BJ (cell line): ENCODE measurements at regions of chr11 and their contacts with region 1.

Region 1: GRCh38 chr11:17063171-17064002 is 14.1 kb downstream of the RPS13 start:
- DNase-seq: no peak
- H3K4me3 ChIP-seq: no peak overlapping the region
- H3K27me3 ChIP-seq: no peaks in the 10 kb centered on the region
- CTCF ChIP-seq: peak; percentile 87

Region 2: DNA sequence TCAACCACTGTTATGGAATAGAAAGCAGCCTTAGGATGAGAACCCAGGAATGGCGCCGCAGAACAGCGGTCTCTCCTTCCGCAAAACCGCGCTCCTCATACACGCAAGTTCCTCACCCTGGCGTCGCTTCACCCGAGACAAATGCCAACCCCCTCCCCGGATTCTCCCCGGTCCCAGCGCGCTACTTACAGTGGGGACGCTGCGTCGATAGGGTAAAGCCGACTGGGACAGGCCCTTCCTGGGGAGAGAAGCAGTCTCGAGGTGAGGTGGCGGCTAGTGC is 13.8 kb after region 1 on chr11:
- CTCF ChIA-PET with region 1: interaction called, 14 read pairs
- POLR2A ChIA-PET with region 1: no interaction called
- DNase-seq: no peak
- H3K4me3 ChIP-seq: peak overlapping the region; percentile 89
- H3K27me3 ChIP-seq: no peaks in the 10 kb centered on the region
- CTCF ChIP-seq: no peak